CD4-positive, alpha-beta T cell (primary cell): ENCODE measurements at regions of chr12 and their contacts with region 1.

Region 1: DNA sequence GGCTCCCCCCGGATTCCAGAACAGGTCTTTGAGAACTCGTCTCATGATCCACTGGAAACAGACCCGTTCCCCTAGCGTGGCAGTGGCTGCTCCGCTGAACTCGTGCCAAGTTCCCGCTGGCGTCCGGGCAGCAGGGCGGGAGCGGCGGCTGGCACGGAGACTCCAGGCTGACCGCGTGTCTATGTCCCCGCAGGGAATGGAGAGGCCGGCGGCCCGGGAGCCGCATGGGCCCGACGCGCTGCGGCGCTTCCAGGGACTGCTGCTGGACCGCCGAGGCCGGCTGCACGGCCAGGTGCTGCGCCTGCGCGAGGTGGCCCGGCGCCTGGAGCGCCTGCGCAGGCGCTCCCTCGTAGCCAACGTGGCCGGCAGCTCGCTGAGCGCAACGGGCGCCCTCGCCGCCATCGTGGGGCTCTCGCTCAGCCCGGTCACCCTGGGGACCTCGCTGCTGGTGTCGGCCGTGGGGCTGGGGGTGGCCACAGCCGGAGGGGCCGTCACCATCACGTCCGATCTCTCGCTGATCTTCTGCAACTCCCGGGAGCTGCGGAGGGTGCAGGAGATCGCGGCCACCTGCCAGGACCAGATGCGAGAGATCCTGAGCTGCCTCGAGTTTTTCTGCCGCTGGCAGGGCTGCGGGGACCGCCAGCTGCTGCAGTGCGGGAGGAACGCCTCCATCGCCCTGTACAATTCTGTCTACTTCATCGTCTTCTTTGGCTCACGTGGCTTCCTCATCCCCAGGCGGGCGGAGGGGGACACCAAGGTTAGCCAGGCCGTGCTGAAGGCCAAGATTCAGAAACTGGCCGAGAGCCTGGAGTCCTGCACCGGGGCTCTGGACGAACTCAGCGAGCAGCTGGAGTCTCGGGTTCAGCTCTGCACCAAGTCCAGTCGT is 1.5 kb downstream of the APOLD1 start:
- DNase-seq: peak; percentile 44 to 92 (median 68)
- ATAC-seq: peak; percentile 87
- H3K4me3 ChIP-seq: peak overlapping the region; percentile 79
- H3K4me3 Mint-ChIP-seq: peak overlapping the region; percentile 93
- H3K27ac ChIP-seq: peak overlapping the region; percentile 64 to 75
- H3K27ac Mint-ChIP-seq: peak overlapping the region; percentile 83
- H3K4me1 ChIP-seq: peaks cover 27% of the 10 kb centered on the region
- H3K4me1 Mint-ChIP-seq: peaks cover 20% of the 10 kb centered on the region
- H3K27me3 ChIP-seq: no peaks in the 10 kb centered on the region
- H3K27me3 Mint-ChIP-seq: no peaks in the 10 kb centered on the region
- CTCF ChIP-seq: no peak

Region 2: DNA sequence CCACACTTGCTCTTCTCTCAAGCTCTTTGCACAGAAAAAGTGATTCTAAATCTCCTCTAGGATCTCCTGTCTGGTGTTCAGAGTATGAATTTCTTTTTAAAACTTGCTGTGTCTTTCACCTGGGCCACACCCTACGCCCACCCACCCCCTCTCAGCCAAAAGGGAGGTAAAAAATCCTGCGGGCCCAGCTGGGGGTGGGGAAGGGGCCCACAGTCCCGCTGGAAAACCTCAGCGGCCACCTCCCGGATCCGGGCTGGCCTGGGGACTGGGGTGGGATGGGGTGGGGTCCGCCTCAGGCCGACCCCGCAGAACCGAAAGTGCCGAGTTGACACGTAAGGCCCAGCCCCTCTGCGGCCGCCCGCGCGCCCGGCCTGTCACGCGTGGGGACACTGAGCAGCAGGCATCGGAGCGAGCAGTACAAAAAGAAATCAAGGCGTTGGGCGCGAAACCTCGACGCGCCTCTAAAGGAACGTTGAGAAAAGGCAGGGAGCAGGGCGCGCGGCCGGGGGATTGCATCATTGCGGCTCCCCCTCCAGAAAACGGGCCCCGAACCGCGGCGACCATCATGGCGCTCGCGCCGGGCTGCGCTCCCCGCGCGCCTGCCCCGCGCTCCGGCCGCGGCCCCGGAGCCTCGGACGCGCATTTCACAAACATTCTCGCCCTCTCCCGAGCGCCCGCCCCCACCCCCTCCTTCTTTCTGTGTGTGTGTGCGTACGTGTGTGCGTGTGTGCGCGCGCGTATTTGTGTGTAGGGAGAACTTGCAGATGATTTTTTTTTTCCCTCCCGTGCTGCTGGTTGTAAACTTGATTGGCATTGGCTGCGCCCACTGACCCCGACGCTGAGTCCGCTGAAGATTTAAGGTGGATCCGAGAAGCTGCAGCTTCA is 62.1 kb before region 1 on chr12:
- CTCF ChIA-PET with region 1: no interaction called
- POLR2A ChIA-PET with region 1: interaction called, 12 read pairs
- intact Hi-C with region 1: loop called in 1 of 2 experiments (anchors 2 kb)
- DNase-seq: peak in 11 of 14 experiments; percentile 72 to 98 (median 84)
- ATAC-seq: peak; percentile 56
- H3K4me3 ChIP-seq: peak overlapping the region; percentile 97
- H3K4me3 Mint-ChIP-seq: peak overlapping the region; percentile 98
- H3K27ac ChIP-seq: peak overlapping the region; percentile 89 to 91
- H3K27ac Mint-ChIP-seq: peak overlapping the region; percentile 95
- H3K4me1 ChIP-seq: peaks cover 37% of the 10 kb centered on the region
- H3K4me1 Mint-ChIP-seq: peaks cover 63% of the 10 kb centered on the region
- H3K27me3 ChIP-seq: no peaks in the 10 kb centered on the region
- H3K27me3 Mint-ChIP-seq: peaks cover 8% of the 10 kb centered on the region
- CTCF ChIP-seq: no peak

Region 3: DNA sequence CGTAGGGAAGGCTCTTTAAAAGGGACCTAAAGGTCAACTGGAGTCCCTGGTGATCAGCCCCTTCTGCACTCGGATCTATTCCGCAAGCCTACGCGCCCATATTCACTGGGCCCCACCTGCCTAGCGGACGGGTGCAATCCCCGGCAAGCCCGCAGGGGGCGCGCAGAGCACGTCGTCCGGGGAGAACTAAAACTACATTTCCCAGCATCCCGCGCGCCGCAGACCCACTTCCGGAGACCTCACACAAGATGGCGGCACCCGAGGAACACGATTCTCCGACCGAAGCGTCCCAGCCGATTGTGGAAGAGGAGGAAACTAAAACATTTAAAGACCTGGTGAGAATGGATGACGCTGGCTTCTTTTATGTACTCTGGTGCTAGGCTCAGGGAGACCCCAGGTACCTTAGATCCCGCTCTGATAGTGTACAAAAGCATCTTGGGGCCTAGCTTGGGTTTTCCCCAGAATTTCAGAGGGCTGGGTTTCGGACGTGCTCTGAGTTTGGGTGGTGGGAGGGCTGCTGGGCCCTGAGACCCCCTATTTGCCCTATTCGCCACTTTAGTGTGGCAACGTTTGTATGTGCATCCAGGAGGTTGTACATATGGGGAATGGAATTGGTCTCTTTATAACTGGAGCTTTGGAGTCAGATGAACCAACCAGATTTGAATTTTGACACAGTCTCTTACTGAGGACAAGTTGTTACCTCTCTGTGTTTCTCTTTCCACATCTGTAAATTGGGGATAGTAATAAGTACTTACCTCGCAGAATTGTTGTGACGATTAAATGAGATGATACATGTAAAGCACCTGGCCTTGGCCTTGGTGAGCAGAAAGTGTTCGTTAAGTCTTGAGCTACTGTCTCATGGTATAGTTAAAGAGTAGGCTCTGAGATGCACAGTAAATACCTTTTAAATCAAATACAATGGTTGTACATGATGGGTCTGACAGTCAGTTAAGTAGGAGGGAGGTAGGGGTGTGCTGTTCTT is 26.5 kb after region 1 on chr12 and contains the start of gene DDX47:
- CTCF ChIA-PET with region 1: interaction called, 9 read pairs
- POLR2A ChIA-PET with region 1: interaction called, 31 read pairs
- intact Hi-C with region 1: loop called (anchors 1 to 2 kb)
- DNase-seq: peak; percentile 94 to 99 (median 97)
- ATAC-seq: peak; percentile 83
- H3K4me3 ChIP-seq: peak within 1 kb of the TSS; percentile 95
- H3K4me3 Mint-ChIP-seq: peak within 1 kb of the TSS; percentile 94
- H3K27ac ChIP-seq: peak within 1 kb of the TSS; percentile 74 to 88
- H3K27ac Mint-ChIP-seq: peak within 1 kb of the TSS; percentile 91
- H3K4me1 ChIP-seq: peaks cover 42% of the 10 kb centered on the region
- H3K4me1 Mint-ChIP-seq: peaks cover 65% of the 10 kb centered on the region
- H3K27me3 ChIP-seq: no peaks in the 10 kb centered on the region
- H3K27me3 Mint-ChIP-seq: no peaks in the 10 kb centered on the region
- CTCF ChIP-seq: peak; percentile 96
- total RNA-seq, gene DDX47: 153 TPM

Region 4: DNA sequence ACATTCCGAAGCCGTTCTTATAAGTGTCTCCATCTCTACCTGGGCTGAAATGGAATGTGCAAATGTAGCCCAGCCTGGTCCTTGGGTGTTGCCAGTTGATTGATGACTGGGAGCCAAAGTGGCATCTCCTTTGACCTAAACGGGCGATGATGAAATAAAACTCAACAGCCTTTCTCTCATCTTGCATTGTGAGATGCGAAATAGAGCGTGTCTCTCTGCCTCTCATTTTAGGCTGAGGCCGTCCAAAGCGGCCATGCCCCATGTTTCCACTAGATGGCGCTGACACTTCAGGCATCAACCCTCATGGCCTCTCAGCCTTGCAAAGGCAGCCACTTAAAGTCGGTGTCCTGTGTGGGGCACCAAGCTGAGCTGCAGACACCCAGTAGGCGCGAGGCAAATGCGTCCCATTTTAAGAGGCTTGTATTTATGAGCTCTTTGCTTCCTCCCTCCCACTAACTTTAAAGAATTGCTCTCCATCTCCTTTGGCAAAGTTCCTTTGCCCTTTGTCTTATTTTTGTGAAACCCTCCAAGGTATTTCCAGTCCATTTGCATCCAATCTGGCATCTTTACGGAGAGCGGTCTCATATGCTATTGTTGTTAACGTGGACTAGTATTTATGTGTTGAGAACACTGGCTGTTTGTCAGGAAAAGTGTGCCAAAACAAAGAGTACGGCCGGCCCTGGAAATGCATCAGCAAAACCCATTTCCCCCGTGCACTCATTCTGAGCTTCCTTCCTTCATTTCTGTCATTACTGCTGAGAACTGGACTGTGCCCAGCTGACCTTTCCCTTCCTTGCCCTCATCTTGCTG is 129.4 kb after region 1 on chr12:
- CTCF ChIA-PET with region 1: interaction called, 6 read pairs
- POLR2A ChIA-PET with region 1: interaction called, 3 read pairs
- intact Hi-C with region 1: loop called (anchors 2 kb)
- DNase-seq: peak; percentile 72 to 89 (median 83)
- ATAC-seq: peak; percentile 99
- H3K4me3 ChIP-seq: no peak overlapping the region
- H3K4me3 Mint-ChIP-seq: no peak overlapping the region
- H3K27ac ChIP-seq: no peak overlapping the region
- H3K27ac Mint-ChIP-seq: no peak overlapping the region
- H3K4me1 ChIP-seq: peaks cover 7% of the 10 kb centered on the region
- H3K4me1 Mint-ChIP-seq: peaks cover 7% of the 10 kb centered on the region
- H3K27me3 ChIP-seq: peaks cover 0 to 4% of the 10 kb centered on the region in 2 experiments
- H3K27me3 Mint-ChIP-seq: peaks cover 12% of the 10 kb centered on the region
- CTCF ChIP-seq: peak; percentile 92

Region 5: DNA sequence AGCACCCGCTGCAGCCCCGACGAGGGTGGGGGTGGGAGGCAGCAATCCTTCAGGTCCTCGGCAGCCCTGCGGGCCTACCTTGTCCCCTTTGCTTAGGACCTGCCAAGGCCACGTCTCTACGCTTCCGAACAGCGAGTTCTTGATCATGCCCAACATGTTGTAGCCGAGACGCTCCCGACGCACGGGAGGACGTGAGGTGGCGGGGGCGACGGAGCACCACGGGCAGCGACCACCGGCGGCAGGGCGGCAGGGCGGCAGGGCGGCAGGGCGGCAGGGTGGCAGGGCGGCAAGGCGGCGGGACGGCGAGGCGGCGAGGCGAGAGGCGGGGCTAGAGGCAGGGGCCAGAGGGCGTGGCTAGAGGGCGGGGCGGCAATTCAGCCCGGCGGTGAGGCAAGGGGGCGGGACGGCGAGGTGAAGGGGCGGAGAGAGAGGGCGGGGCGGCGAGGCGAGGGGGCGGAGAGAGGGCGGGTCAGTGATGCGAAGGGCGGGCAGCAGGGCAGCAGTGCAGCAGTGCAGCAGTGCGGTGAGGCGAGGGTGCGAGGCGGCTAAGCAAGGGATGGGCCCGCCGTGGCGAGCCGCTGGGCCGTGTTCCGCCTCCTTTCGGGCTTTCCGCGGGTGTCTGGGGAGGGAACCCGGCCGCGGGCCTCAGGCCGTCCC is 213.1 kb after region 1 on chr12 and contains the start of gene HEBP1:
- CTCF ChIA-PET with region 1: no interaction called
- POLR2A ChIA-PET with region 1: no interaction called
- intact Hi-C with region 1: loop called (anchors 5 kb)
- DNase-seq: peak; percentile 92 to 98 (median 96)
- ATAC-seq: peak; percentile 87
- H3K4me3 ChIP-seq: peak within 1 kb of the TSS; percentile 95
- H3K4me3 Mint-ChIP-seq: peak within 1 kb of the TSS; percentile 93
- H3K27ac ChIP-seq: peak within 1 kb of the TSS; percentile 32 to 45
- H3K27ac Mint-ChIP-seq: peak within 1 kb of the TSS; percentile 89
- H3K4me1 ChIP-seq: peaks cover 29% of the 10 kb centered on the region
- H3K4me1 Mint-ChIP-seq: peaks cover 42% of the 10 kb centered on the region
- H3K27me3 ChIP-seq: peaks cover 0 to 3% of the 10 kb centered on the region in 2 experiments
- H3K27me3 Mint-ChIP-seq: no peaks in the 10 kb centered on the region
- CTCF ChIP-seq: no peak
- total RNA-seq, gene HEBP1: 11.9 to 12.5 TPM

Region 6: GRCh38 chr12:13211859-13212664 is 425.1 kb after region 1 on chr12:
- CTCF ChIA-PET with region 1: interaction called, 6 read pairs
- POLR2A ChIA-PET with region 1: no interaction called
- intact Hi-C with region 1: loop called in 1 of 2 experiments (anchors 5 kb)
- DNase-seq: peak; percentile 55 to 87 (median 66)
- ATAC-seq: peak; percentile 84
- H3K4me3 ChIP-seq: no peak overlapping the region
- H3K4me3 Mint-ChIP-seq: no peak overlapping the region
- H3K27ac ChIP-seq: no peak overlapping the region
- H3K27ac Mint-ChIP-seq: no peak overlapping the region
- H3K4me1 ChIP-seq: peaks cover 6% of the 10 kb centered on the region
- H3K4me1 Mint-ChIP-seq: peaks cover 7% of the 10 kb centered on the region
- H3K27me3 ChIP-seq: no peaks in the 10 kb centered on the region
- H3K27me3 Mint-ChIP-seq: no peaks in the 10 kb centered on the region
- CTCF ChIP-seq: peak; percentile 89